Right ventricle myocardium inferior (tissue), 1 donor: ENCODE measurements at regions of chr17 and their contacts with region 1.

Region 1: DNA sequence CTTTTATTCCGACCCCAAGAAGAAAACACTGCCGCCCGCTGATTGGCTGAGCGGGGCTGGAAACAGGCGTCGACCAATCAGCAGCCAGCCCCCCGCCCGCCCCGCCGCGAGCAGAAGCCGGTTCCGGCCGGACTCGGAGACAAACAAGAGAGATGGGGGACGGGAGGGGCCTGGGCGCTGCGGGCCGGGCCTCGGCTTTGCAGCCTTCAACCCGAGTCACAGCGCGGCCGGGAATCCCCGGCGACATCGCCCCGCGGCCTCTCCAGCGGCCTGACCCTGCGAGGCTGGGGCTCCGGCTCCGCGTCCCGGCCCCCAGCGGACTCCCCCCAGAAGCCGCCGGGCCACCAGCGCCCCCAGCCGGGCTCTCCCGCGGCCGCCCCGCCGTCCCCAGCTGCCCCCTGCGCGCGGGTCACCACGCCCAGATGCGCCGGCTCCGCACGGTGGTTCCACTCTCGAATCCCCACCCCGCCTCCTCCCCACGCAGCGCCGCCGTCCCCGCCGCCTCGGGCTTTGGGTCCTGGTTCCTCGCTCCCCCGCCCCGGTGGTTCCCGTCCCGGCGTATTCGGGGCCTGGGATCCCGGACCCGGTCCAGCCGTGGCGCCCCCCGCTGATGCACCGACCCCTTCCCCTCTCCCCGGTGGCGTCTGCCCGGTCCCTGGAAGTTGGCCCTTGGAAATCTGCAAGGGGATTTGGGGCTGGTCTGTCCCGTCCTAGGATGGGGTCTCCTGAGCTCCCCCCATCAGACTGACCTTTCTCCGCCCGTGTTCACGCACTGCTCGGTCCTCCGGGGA is 417 bp upstream of the SLC43A2 start:
- DNase-seq: peak; percentile 98
- ATAC-seq: peak; percentile 88

Region 2: GRCh38 chr17:1573916-1574696 is 54.9 kb before region 1 on chr17:
- intact Hi-C with region 1: loop called (anchors 1 kb)
- DNase-seq: peak; percentile 96
- ATAC-seq: peak; percentile 63